Activated CD4-positive, alpha-beta memory T cell treated with anti-CD3 and anti-CD28 coated beads for 36 hours (primary cell): ENCODE measurements at regions of chr7 and their contacts with region 1.

Region 1: GRCh38 chr7:23055582-23056178 is 41.8 kb upstream of the HYCC1 start:
- DNase-seq: peak; percentile 62
- H3K4me3 Mint-ChIP-seq: no peak overlapping the region
- H3K27ac Mint-ChIP-seq: no peak overlapping the region
- H3K4me1 Mint-ChIP-seq: peaks cover 5% of the 10 kb centered on the region
- H3K27me3 Mint-ChIP-seq: peaks cover 3% of the 10 kb centered on the region

Region 2: GRCh38 chr7:22782616-22783232 is 273.0 kb before region 1 on chr7:
- CTCF ChIA-PET with region 1: interaction called, 42 read pairs
- POLR2A ChIA-PET with region 1: no interaction called
- intact Hi-C with region 1: loop called (anchors 2 kb)
- DNase-seq: peak; percentile 82
- H3K4me3 Mint-ChIP-seq: no peak overlapping the region
- H3K27ac Mint-ChIP-seq: no peak overlapping the region
- H3K4me1 Mint-ChIP-seq: no peaks in the 10 kb centered on the region
- H3K27me3 Mint-ChIP-seq: no peaks in the 10 kb centered on the region

Region 3: GRCh38 chr7:22854158-22855048 is 201.3 kb before region 1 on chr7:
- CTCF ChIA-PET with region 1: interaction called, 29 read pairs
- POLR2A ChIA-PET with region 1: interaction called, 3 read pairs
- intact Hi-C with region 1: loop called (anchors 1 kb)
- DNase-seq: no peak
- H3K4me3 Mint-ChIP-seq: peak overlapping the region; percentile 93
- H3K27ac Mint-ChIP-seq: peak overlapping the region; percentile 93
- H3K4me1 Mint-ChIP-seq: peaks cover 34% of the 10 kb centered on the region
- H3K27me3 Mint-ChIP-seq: peaks cover 2% of the 10 kb centered on the region

Region 4: DNA sequence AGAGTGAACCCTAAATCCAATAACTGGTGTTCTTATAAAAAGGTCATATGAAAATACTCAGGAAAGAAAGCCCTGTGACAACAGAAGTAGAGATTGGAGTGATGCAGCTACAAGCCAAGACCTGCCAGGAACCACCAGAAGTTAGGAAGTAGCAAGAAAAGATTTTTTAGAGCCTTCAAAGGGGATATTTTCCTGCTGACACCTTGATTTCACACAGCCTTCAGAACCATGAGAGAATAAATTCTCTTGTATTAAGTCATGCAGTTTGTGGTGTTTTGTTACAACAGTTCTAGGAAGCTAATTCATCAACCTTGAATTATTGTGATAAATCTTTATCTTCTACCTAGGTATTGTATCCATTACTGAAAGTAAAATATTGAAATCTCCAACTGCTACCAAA is 122.8 kb before region 1 on chr7:
- CTCF ChIA-PET with region 1: no interaction called
- POLR2A ChIA-PET with region 1: no interaction called
- intact Hi-C with region 1: loop called (anchors 2 kb)
- DNase-seq: no peak
- H3K4me3 Mint-ChIP-seq: no peak overlapping the region
- H3K27ac Mint-ChIP-seq: no peak overlapping the region
- H3K4me1 Mint-ChIP-seq: no peaks in the 10 kb centered on the region
- H3K27me3 Mint-ChIP-seq: no peaks in the 10 kb centered on the region

Region 5: GRCh38 chr7:23020742-23021401 is 34.8 kb before region 1 on chr7:
- CTCF ChIA-PET with region 1: interaction called, 12 read pairs
- POLR2A ChIA-PET with region 1: no interaction called
- intact Hi-C with region 1: no loop called
- DNase-seq: peak; percentile 27
- H3K4me3 Mint-ChIP-seq: no peak overlapping the region
- H3K27ac Mint-ChIP-seq: peak overlapping the region; percentile 71
- H3K4me1 Mint-ChIP-seq: peaks cover 35% of the 10 kb centered on the region
- H3K27me3 Mint-ChIP-seq: peaks cover 3% of the 10 kb centered on the region